Left cardiac atrium (tissue), 4 donors: ENCODE measurements at regions of chr5 and their contacts with region 1.

Region 1: GRCh38 chr5:115309751-115310370 is 13.4 kb upstream of the CCDC112 start:
- DNase-seq: no peak
- ATAC-seq: peak; percentile 51 to 57

Region 2: DNA sequence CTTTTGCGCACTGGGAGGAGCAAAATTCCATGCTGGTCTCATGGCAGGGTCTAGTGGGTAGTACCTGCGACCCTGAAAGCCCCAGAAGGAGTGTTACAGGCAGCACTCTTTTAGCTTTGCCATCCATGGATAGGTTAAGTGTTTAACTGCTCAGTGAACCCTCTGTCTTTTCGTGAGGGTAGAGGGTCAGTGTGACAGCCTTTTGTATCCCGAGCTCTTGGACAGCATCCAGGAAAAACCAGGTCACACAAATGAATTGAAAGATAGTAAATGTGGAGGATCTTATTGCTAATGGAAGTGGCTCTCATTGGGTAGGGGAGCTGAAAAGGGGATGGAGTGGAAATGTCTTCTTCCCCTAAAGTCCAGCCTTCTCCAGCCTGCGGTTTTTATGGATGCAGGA is 44.4 kb after region 1 on chr5:
- intact Hi-C with region 1: no loop called
- DNase-seq: no peak
- ATAC-seq: no peak

Region 3: DNA sequence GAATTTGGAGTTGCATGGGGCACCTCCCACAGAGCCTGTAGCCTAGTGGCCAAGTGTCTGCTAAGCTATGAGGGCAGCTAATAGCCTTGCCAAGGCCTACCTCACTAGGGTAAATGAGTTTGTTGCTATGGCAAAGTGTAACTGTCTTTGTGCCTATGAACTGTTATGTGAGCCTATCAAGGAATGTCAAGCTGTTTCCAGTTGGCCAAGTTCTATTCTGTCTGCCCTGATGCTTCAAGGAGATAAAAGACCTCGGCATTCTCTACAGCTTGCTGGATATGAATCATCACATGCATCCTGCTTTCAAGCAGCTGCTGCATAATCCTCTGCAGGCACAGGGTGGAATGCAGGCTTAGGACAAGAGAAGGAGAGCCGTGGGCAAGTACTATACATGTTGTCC is 56.4 kb after region 1 on chr5:
- intact Hi-C with region 1: loop called in 1 of 2 experiments (anchors 5 kb)
- DNase-seq: no peak
- ATAC-seq: peak; percentile 70 to 92

Region 4: GRCh38 chr5:115579747-115580173 is 269.9 kb after region 1 on chr5:
- intact Hi-C with region 1: loop called in 1 of 2 experiments (anchors 5 kb)
- DNase-seq: no peak
- ATAC-seq: no peak

Region 5: GRCh38 chr5:115586601-115587048 is 276.8 kb after region 1 on chr5:
- intact Hi-C with region 1: loop called (anchors 2 to 5 kb)
- DNase-seq: no peak
- ATAC-seq: no peak